AG04450 (cell line): ENCODE measurements at regions of chr10 and their contacts with region 1.

Region 1: GRCh38 chr10:109883859-109884771 is 39.2 kb downstream of the XPNPEP1 start:
- DNase-seq: peak; percentile 77
- H3K4me3 ChIP-seq: no peak overlapping the region
- H3K27ac ChIP-seq: peak overlapping the region; percentile 63
- H3K27me3 ChIP-seq: no peaks in the 10 kb centered on the region
- CTCF ChIP-seq: peak; percentile 97

Region 2: DNA sequence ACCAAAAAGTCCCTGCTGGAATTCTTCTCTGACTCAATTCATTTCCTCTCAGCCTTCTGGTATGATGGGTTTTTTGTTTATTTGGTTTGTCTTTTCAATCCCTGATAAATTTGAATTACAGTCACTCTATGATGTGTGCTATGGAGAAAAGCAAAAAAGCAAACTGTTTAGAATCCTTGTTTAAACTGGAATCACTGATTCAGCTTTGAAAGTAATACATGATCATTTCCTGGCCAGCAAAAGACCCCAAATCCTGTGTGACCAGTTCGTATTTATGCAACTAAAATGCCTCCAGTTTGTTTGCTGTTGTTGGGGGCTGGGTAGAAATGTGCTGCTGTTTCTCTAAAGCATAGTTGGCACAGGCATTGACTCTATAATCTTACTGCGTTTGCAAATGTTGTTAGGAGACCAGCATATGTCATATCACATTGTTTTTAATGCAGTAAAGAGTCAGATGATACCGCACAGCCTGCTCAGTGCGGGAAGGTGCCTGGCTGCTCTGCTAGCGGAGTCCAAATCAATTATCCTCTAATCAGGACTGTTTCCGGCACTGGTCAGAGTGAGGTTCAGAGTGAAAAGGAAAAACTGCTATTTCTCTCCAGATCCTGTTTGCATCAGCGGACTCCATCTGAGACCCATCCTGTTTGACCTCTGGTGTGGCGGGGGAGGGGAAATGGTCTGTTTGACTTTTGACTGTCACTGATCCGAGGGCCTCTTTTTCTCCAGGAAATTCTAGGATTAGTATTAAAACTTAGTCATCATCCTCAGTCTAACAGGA is 83.0 kb after region 1 on chr10:
- CTCF ChIA-PET with region 1: interaction called, 10 read pairs
- POLR2A ChIA-PET with region 1: no interaction called
- DNase-seq: peak; percentile 50
- H3K4me3 ChIP-seq: peak overlapping the region; percentile 33
- H3K27ac ChIP-seq: peak overlapping the region; percentile 87
- H3K27me3 ChIP-seq: no peaks in the 10 kb centered on the region
- CTCF ChIP-seq: no peak

Region 3: DNA sequence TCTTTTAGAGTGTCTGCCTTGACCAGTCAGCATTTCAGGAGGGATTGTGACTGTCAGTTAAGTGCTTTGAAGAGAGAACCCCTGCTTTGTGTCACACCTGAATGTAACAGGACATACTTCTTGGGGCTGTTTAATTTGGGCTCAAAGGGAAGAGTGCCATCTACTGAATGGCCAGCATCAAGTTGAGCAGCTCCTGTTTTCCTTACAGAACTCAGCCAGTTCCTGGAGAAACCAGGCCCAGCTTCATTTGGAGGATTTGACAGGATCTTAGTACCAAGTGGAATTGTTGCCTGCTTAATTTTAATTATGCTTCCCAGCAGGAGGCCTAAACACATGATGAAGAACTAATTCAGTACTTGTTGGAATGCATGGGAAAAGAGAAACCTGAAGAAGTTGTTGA is 131.9 kb after region 1 on chr10:
- CTCF ChIA-PET with region 1: interaction called, 23 read pairs
- POLR2A ChIA-PET with region 1: no interaction called
- DNase-seq: no peak
- H3K4me3 ChIP-seq: no peak overlapping the region
- H3K27ac ChIP-seq: no peak overlapping the region
- H3K27me3 ChIP-seq: no peaks in the 10 kb centered on the region
- CTCF ChIP-seq: peak; percentile 20; the same call in 1 of the 2 replicates

Region 4: GRCh38 chr10:110059925-110060324 is 175.8 kb after region 1 on chr10:
- CTCF ChIA-PET with region 1: interaction called, 20 read pairs
- POLR2A ChIA-PET with region 1: no interaction called
- DNase-seq: no peak
- H3K4me3 ChIP-seq: no peak overlapping the region
- H3K27ac ChIP-seq: no peak overlapping the region
- H3K27me3 ChIP-seq: no peaks in the 10 kb centered on the region
- CTCF ChIP-seq: no peak

Region 5: DNA sequence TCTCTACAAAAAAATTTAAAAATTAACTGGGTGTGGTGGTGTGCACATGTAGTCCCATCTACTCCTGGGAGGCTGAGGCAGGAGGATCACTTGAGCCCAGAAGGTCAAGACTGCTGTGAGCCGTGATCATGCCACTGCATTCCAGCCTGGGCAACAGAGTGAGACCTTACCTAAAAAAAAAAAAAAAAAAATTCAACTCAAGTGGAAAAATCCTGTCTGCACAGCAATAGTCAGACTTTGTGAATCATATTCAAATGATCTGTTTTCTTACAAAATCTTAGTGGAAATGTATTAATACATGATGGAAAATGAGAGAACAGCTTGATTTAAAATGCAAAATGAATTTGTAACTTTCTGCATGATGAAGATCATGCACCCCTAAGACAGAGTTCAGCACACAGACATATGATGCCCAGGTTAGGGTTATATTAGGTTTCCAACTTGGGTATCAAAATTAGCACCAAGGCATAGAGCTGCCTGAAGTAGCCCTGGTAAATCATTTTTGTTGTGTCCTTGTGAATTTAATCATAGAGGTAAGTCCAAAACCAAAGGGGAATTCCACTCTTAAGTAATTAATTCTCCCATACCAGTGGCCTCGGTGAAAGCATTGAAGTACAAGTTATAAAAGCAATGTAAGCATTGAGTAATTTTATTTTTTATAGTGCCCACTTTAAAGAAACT is 217.5 kb after region 1 on chr10:
- CTCF ChIA-PET with region 1: interaction called, 16 read pairs
- POLR2A ChIA-PET with region 1: no interaction called
- DNase-seq: no peak
- H3K4me3 ChIP-seq: no peak overlapping the region
- H3K27ac ChIP-seq: no peak overlapping the region
- H3K27me3 ChIP-seq: no peaks in the 10 kb centered on the region
- CTCF ChIP-seq: no peak

Region 6: GRCh38 chr10:110225756-110226542 is 341.8 kb after region 1 on chr10:
- CTCF ChIA-PET with region 1: interaction called, 13 read pairs
- POLR2A ChIA-PET with region 1: no interaction called
- DNase-seq: peak; percentile 88
- H3K4me3 ChIP-seq: peak overlapping the region; percentile 78
- H3K27ac ChIP-seq: peak overlapping the region; percentile 77
- H3K27me3 ChIP-seq: no peaks in the 10 kb centered on the region
- CTCF ChIP-seq: peak; percentile 57